ENCODE measurements at regions of chr15 and their contacts with region 1.

Region 1: GRCh38 chr15:62896978-62897647 is 145.4 kb upstream of the TPM1 start:
- DNase-seq: peak; percentile 90 to 95 (median 95)
- ATAC-seq: peak; percentile 88 to 94
- H3K4me3 ChIP-seq: peak overlapping the region; percentile 7
- H3K27ac ChIP-seq: peak overlapping the region; percentile 86
- H3K4me1 ChIP-seq: peaks cover 7% of the 10 kb centered on the region
- H3K27me3 ChIP-seq: no peaks in the 10 kb centered on the region

Region 2: DNA sequence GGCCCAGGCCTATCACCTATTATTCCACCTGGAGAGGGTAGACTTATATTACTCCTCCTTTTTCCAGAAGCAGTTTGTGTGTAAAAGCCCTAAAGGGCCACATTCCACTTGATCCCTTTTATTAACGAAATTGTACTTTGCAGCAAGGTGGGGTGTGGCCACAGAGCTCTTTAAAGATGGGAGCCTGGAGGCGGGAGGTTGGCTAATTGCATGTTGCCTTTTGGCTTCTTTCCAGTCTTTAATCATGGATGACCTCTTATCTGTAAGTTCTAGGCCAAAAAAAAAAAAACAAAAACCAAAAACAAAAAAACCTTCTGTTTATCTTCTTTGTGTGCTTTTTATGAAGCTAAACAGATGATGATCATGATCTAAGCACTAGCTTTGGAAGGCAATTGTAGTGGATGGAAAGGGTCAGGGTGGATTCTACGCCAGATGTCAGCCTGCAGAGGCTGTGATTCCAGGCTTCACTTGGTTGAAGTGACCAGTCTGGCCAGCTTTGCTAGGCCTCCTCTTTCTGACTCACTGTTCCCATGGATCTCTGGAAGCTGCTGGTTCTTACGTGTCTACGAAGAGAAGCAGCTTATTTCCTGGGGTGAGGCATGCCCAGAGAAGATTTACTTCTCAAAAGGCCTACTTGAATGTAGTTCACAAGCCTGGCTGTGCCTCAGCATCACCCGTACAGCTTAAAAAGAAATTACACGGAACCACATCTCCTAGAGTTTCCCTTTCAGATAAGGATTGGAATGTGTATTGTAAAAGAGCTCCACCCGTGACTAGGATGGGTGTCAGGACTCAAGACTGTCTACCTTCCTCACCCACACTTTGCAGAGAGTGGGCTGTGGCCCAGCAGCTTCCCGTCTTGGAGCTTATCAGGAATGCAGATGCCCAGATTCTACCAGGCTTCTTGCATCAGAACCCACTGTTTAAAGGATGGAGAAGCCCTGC is 401.2 kb before region 1 on chr15:
- intact Hi-C with region 1: no loop called
- DNase-seq: peak; percentile 65 to 75 (median 66)
- ATAC-seq: peak; percentile 88 to 93
- H3K4me3 ChIP-seq: no peak overlapping the region
- H3K27ac ChIP-seq: peak overlapping the region; percentile 4
- H3K4me1 ChIP-seq: peaks cover 17% of the 10 kb centered on the region
- H3K27me3 ChIP-seq: no peaks in the 10 kb centered on the region

Region 3: DNA sequence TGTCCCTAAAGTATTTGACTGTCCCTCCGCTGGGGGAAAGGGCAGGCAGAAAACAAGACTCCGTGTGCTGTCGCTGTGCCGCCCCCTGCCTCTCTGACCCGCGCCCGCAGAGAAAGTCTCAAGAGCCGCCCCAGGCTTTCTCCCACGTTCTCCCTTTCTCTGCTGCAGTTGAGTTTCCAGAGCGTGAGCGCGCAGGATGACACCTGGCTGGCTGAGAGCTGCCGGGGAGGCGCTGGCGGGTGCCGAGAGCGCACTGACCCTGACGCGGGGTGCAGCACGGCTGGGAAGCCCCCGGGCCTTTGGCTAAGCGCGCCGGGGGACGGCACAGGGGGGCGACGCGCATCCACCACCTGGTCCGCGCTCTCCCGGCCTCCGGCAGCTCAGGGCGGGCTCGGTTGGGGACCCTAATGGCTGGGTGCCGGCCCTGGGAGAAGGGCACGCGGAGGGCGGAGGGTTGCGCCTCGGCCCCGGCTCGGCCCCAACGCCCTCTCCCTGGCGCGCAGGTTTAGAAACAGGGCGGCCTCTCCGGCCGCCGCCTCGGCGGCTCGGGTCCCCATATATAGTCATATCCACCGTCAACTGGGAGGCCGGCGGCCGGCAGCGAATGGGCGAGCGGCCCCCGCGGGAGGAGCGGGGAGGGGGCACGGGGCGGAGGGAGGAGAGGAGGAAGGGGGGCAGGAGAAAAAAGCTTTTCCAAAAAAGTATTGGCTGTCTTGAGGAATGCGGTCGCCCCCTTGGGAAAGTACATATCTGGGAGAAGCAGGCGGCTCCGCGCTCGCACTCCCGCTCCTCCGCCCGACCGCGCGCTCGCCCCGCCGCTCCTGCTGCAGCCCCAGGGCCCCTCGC is 145.1 kb after region 1 on chr15 and contains the start of gene TPM1:
- intact Hi-C with region 1: loop called in 1 of 4 experiments (anchors 5 kb)
- DNase-seq: peak; percentile 85 to 96 (median 94)
- ATAC-seq: peak; percentile 88 to 89
- H3K4me3 ChIP-seq: peak within 1 kb of the TSS; percentile 86
- H3K27ac ChIP-seq: peak within 1 kb of the TSS; percentile 91
- H3K4me1 ChIP-seq: peaks cover 2% of the 10 kb centered on the region
- H3K27me3 ChIP-seq: no peaks in the 10 kb centered on the region
- total RNA-seq, gene TPM1: 6,360 to 7,970 (median 7,200) TPM

Measured in right cardiac atrium (tissue), 5 donors.